GM18951 (cell line): ENCODE measurements at regions of chr1 and their contacts with region 1.

Region 1: GRCh38 chr1:246753670-246754535 is 29.7 kb downstream of the SCCPDH start:
- POLR2A ChIP-seq: no peak

Region 2: DNA sequence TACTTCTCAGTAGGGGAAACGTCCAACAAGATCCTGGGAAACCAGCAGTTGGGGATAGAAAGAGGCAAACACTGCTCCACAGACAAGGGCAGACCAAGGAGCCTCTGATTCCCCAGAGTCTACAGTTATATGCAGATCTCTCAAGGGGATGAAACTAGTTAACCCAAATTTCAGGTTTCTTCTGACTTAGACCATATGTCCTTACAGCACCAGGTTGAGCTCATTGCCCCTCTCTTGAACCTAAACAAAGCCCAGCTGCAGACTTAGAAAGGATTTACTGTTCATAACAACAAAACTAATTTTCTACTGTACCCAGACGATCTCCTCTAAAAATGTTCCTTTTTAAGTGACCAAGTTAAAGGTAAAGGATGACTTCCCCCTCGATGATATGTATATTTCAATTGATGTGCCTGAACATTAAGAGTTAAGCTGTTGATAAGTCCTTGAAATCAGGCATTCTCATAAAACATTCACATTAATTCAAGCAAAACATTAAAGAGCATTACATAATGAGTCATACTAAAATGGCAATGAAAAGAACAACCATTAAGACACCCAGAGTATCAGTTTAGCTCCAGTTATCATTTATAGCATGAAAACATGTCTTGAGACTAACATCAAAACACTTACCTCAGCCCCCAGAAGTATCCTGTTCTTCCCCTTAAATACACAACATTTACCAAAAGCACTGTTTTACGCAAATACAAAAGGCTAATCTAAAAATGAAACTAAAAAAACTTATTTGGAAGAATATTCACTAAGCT is 270.9 kb before region 1 on chr1:
- in situ Hi-C with region 1: loop called (anchors 10 kb)
- POLR2A ChIP-seq: no peak

Region 3: DNA sequence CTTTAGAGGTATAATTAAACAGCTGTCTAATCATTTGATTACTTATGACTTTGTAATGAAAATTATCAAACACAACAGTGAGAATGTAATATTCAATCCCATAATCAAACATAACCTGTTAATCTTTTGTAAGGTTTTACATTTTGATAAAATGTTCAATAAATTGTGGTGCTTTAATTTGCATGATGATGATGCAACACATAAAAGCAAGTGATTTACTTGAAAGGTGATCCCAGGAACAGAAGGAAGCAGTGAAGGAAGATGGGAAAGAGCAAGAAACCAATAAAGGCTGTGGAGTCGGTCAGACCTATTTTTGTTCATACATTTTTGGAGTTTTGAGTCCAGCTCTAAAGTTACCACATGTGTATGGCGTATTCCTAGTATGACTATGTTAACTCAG is 224.4 kb after region 1 on chr1:
- in situ Hi-C with region 1: no loop called
- POLR2A ChIP-seq: no peak